PC-3 (cell line): ENCODE measurements at regions of chr1 and their contacts with region 1.

Region 1: GRCh38 chr1:68551459-68551858 is 54.6 kb upstream of the DEPDC1 start:
- DNase-seq: peak; percentile 58
- ATAC-seq: peak; percentile 91
- H3K4me3 ChIP-seq: no peak overlapping the region
- H3K27ac ChIP-seq: no peak overlapping the region
- H3K4me1 ChIP-seq: peaks cover 14% of the 10 kb centered on the region
- H3K27me3 ChIP-seq: no peaks in the 10 kb centered on the region
- CTCF ChIP-seq: no peak

Region 2: DNA sequence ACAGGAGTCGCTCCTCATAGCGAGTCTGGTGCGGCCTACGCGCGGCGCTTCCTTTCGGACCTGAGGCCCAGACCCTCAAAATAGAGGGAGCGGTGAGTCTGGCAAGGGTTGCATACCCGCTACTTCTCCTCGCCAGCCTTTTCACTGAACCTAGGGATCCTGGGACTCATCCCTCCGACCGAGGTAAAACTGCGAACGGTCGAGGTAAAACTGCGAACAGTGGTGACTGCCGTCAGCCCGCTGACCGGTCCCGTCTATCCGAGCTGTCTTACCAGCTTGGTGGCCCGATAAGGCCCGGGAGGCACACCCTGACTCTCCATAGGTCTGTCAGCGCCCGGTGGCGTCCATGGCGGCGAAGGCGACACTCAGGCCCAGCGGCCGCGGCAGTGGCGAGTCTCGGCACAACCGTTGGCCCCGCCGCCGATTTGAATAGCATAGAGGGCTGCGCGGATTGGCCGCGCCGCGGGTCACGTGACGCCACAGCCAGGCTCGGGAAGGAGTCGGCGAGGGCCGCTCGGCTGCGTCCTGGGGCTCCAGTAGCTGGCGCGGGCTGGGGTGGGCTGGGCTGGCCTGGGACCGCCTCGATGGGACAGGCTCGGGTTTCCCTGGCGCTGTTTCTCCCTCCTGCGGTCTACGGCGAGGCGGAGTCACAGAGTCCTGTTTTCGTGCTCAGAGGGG is 54.6 kb before region 1 on chr1 and contains the start of gene DEPDC1:
- CTCF ChIA-PET with region 1: no interaction called
- POLR2A ChIA-PET with region 1: no interaction called
- intact Hi-C with region 1: loop called (anchors 2 kb)
- DNase-seq: peak; percentile 96
- ATAC-seq: peak; percentile 94
- H3K4me3 ChIP-seq: peak within 1 kb of the TSS; percentile 82
- H3K27ac ChIP-seq: peak within 1 kb of the TSS; percentile 73
- H3K4me1 ChIP-seq: peaks cover 38% of the 10 kb centered on the region
- H3K27me3 ChIP-seq: no peaks in the 10 kb centered on the region
- CTCF ChIP-seq: no peak
- total RNA-seq, gene DEPDC1: 21.0 and 21.6 TPM in 2 replicates

Region 3: DNA sequence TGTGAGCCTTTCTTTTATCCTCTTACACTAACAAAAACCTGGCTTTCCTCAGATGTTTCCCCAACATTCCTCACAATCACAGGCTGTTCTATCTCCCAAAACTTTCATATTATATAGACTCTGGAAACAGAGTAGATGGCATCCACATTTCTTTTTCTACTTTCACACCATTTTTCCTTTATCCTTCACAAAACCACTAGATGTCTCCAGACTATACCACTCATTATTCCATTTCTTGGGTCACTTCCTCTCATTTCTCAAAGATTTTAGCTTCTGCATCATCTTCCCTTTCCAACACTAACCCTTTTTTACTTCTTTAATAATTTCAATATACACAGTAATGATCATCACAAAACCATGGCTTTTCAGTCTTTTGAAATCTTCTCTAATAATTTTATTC is 231.4 kb after region 1 on chr1:
- CTCF ChIA-PET with region 1: no interaction called
- POLR2A ChIA-PET with region 1: no interaction called
- intact Hi-C with region 1: no loop called
- DNase-seq: peak; percentile 5
- ATAC-seq: no peak
- H3K4me3 ChIP-seq: no peak overlapping the region
- H3K27ac ChIP-seq: no peak overlapping the region
- H3K4me1 ChIP-seq: no peaks in the 10 kb centered on the region
- H3K27me3 ChIP-seq: no peaks in the 10 kb centered on the region; the same call in 1 of the 2 replicates
- CTCF ChIP-seq: no peak; the same call in 1 of the 2 replicates